Panc1 (cell line): ENCODE measurements at regions of chr6 and their contacts with region 1.

Region 1: DNA sequence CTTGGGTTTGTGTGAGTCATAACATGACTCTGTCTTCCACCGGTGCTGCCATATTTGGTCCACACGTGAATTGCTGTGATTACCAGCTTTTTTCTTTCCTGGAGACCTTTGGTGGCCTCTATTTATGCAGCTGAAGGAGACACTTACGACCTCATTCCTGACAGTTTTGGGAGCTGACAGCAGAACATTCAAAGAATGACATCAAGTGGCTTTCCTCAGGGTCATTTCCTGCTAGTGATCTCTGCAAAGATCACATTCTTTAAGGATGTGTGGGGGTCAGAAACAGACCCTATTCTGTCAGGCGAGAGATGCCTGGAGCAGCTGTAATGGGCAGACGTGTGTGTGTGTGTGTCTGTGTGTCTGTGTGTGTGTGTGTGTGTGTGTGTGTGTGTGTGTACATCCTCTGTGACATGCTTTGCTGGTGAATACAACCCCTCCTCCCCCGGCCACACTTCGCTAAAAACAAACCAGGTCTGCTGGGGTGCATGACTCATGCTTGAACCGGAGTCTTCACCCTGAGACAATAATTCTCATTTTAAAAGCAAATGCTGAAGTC is 115.6 kb downstream of the TMEM170B start:
- DNase-seq: no peak
- ATAC-seq: no peak
- H3K4me3 ChIP-seq: no peak overlapping the region
- H3K27ac ChIP-seq: no peak overlapping the region
- H3K4me1 ChIP-seq: no peaks in the 10 kb centered on the region
- H3K27me3 ChIP-seq: no peaks in the 10 kb centered on the region
- CTCF ChIP-seq: no peak

Region 2: GRCh38 chr6:11585426-11586016 is 67.6 kb before region 1 on chr6:
- CTCF ChIA-PET with region 1: no interaction called
- POLR2A ChIA-PET with region 1: no interaction called
- in situ Hi-C with region 1: no loop called
- intact Hi-C with region 1: no loop called
- DNase-seq: peak; percentile 36
- ATAC-seq: no peak
- H3K4me3 ChIP-seq: no peak overlapping the region
- H3K27ac ChIP-seq: no peak overlapping the region
- H3K4me1 ChIP-seq: no peaks in the 10 kb centered on the region
- H3K27me3 ChIP-seq: no peaks in the 10 kb centered on the region
- CTCF ChIP-seq: peak; percentile 70; the same call in 1 of the 2 replicates

Region 3: DNA sequence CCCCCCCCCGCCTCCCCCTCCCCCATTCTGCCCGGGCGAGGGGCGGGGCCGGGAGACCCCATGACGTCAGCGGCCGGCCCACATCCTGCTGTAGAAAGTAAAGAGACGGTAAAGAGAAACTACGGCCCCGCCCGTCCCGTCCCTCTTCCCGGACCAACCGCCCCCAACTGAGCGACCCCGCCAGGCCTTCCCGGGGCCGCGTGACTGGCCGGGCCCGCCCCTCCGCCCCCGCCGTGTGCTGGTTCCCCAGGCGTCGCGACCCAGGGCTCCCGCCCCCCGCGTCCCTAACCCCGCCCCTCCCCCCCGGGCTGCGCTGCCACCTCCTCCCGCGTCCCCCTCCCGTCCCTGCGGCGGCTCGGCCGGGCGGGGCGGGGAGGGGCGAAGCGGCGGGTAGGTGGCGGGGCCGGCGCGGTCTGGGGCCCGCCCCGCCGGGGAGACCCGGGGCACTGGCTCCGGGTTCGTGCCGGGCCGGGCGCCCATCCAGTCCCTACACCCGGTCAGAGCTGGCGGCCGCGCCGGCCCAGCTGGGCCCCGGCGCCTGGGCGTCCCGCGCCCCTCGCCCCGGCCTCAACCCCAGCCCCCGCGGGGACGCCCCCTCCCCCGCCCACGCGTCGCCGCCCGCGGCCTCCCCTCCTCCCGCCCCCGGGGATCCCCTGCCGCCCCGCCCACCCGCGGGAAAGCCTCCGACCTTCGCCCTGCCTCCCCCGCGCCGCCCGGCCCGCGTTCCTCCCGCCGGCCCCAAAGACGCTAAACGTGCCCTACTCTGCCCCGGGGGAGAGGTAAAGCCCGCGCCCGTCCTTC is 358.4 kb after region 1 on chr6:
- CTCF ChIA-PET with region 1: no interaction called
- POLR2A ChIA-PET with region 1: no interaction called
- in situ Hi-C with region 1: no loop called
- intact Hi-C with region 1: loop called (anchors 10 kb)
- DNase-seq: peak; percentile 59
- ATAC-seq: peak; percentile 84
- H3K4me3 ChIP-seq: peak overlapping the region; percentile 70 to 84
- H3K27ac ChIP-seq: no peak overlapping the region
- H3K4me1 ChIP-seq: peaks cover 36% of the 10 kb centered on the region
- H3K27me3 ChIP-seq: no peaks in the 10 kb centered on the region
- CTCF ChIP-seq: no peak

Region 4: GRCh38 chr6:12150812-12151432 is 497.8 kb after region 1 on chr6:
- CTCF ChIA-PET with region 1: no interaction called
- POLR2A ChIA-PET with region 1: no interaction called
- in situ Hi-C with region 1: no loop called
- intact Hi-C with region 1: loop called (anchors 10 kb)
- DNase-seq: no peak
- ATAC-seq: no peak
- H3K4me3 ChIP-seq: no peak overlapping the region
- H3K27ac ChIP-seq: no peak overlapping the region
- H3K4me1 ChIP-seq: peaks cover 24% of the 10 kb centered on the region
- H3K27me3 ChIP-seq: no peaks in the 10 kb centered on the region
- CTCF ChIP-seq: peak; percentile 85